Motor neuron (in vitro differentiated cells): ENCODE measurements at regions of chr3 and their contacts with region 1.

Region 1: GRCh38 chr3:16309558-16309957 is 44.5 kb downstream of the OXNAD1 start:
- ATAC-seq: peak in 2 of 8 experiments; percentile 50 to 59
- H3K4me3 ChIP-seq: no peak overlapping the region
- H3K27ac ChIP-seq: no peak overlapping the region
- H3K4me1 ChIP-seq: no peaks in the 10 kb centered on the region

Region 2: GRCh38 chr3:16511681-16512434 is 202.3 kb after region 1 on chr3:
- in situ Hi-C with region 1: loop called in 1 of 9 experiments (anchors 10 kb)
- ATAC-seq: peak in 3 of 8 experiments; percentile 3 to 62 (median 34)
- H3K4me3 ChIP-seq: no peak overlapping the region
- H3K27ac ChIP-seq: no peak overlapping the region
- H3K4me1 ChIP-seq: peaks cover 34 to 51% of the 10 kb centered on the region in 2 donors